A673 (cell line): ENCODE measurements at regions of chr1 and their contacts with region 1.

Region 1: GRCh38 chr1:171403371-171403770 is 82.0 kb upstream of the PRRC2C start:
- DNase-seq: peak; percentile 13
- H3K4me3 ChIP-seq: no peak overlapping the region
- H3K27ac ChIP-seq: no peak overlapping the region
- H3K4me1 ChIP-seq: no peaks in the 10 kb centered on the region
- H3K27me3 ChIP-seq: no peaks in the 10 kb centered on the region
- CTCF ChIP-seq: no peak

Region 2: GRCh38 chr1:171245458-171246064 is 157.8 kb before region 1 on chr1:
- CTCF ChIA-PET with region 1: no interaction called
- POLR2A ChIA-PET with region 1: no interaction called
- intact Hi-C with region 1: loop called (anchors 5 kb)
- DNase-seq: peak; percentile 52
- H3K4me3 ChIP-seq: no peak overlapping the region
- H3K27ac ChIP-seq: no peak overlapping the region
- H3K4me1 ChIP-seq: no peaks in the 10 kb centered on the region
- H3K27me3 ChIP-seq: no peaks in the 10 kb centered on the region
- CTCF ChIP-seq: peak; percentile 81

Region 3: DNA sequence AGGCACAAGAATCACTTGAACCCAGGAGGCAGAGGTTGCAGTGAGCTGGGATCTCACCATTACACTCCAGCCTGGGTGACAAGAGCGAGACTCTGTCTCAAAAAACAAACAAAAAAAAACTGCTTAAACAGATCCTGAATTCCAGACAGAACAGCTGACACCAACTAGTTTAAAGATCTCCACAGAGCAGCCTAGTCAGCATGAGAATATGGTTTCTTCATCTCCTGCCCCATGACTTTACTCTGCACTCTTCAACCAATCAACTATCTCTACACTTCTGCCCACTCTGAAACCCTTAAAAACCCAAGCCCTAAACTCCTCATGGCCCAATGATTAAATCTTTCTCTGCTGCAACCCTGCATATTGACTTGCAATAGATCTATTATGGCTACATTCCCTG is 74.4 kb after region 1 on chr1:
- CTCF ChIA-PET with region 1: interaction called, 16 read pairs
- POLR2A ChIA-PET with region 1: no interaction called
- intact Hi-C with region 1: no loop called
- DNase-seq: no peak
- H3K4me3 ChIP-seq: no peak overlapping the region
- H3K27ac ChIP-seq: no peak overlapping the region
- H3K4me1 ChIP-seq: no peaks in the 10 kb centered on the region
- H3K27me3 ChIP-seq: no peaks in the 10 kb centered on the region
- CTCF ChIP-seq: no peak